Left cardiac atrium (tissue), 4 donors: ENCODE measurements at regions of chrX and their contacts with region 1.

Region 1: DNA sequence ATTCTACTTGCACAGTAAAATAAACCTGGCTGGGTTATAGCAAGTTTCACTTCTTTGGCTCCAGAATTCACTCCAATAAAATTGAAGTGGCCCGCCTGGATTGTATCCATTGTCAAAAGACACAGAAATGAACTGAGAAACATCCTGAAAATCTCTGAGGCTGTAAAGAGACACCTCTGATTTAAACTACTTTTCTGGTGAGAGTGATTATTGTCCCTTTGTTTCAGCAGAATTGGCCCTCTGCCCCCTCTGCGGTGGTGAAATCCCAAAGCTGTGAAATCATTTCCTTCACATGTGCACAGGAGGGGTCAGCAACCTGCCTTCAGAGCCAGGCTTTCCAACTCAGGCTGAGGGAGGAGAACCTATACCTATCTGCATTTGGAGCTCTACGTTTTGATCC is 23.0 kb downstream of the GAB3 start:
- DNase-seq: peak; percentile 64
- ATAC-seq: peak; percentile 14 to 64

Region 2: DNA sequence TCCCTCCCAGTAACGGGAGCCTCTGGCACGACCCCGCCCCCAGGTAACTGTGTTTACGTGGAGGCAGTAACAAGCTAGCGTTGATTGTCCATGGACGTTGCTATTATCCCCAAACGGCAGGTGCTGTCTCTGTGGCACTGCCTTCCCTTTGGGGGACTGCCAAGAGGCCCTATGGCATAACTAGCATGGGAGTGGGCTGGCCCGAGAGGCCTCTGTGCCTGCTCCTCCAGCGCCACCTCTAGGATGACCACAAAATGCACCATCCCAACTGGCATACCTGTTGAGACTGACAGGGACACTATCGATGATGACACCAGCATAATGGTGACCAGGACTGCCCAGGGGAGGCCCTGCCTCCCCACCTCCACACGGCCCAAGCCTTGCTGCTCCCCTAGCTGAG is 945.6 kb before region 1 on chrX:
- intact Hi-C with region 1: no loop called
- DNase-seq: no peak
- ATAC-seq: no peak

Region 3: GRCh38 chrX:154750301-154751202 is 22.7 kb after region 1 on chrX and contains the start of gene GAB3:
- intact Hi-C with region 1: loop called in 1 of 2 experiments (anchors 2 kb)
- DNase-seq: peak; percentile 51
- ATAC-seq: peak; percentile 67 to 71
- total RNA-seq, gene GAB3: 10.2 to 18.1 TPM

Region 4: DNA sequence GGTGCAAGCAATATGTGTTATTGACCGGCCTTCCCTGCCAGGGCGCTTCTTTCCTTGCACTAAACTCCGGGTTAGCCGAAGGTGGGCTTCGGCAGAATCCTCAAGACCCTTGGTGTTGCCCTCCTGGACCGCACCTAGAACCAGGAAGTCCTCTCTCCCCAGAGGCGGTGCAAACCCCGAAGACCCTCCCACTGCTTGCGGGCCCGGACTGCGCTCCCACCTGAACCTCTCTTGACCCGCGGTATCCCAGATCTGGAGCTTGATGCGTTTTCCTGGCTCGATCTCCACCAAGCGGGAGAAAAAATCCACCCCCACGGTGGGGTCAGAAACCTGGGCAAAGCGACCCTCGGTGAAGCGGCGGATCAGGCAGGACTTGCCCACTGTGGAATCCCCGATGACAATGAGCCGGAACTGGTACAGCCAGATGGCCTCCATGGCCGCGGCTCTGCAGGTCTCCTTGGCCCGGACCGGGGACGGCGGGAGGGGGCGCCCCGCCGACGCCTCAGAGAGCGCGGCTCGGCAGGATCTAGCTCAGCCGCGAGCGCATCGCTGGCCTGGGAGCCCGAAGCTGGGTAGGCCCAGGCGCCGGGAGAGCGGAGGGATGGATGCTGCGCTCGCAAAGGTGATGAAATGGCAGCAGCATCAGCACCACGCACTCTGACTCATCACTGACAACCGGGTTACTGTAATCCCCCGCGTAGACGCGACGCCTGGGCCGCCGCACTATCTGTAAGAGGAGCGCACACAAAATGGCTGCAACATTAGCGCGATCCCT is 536.2 kb after region 1 on chrX and contains the start of gene RAB39B:
- intact Hi-C with region 1: no loop called
- DNase-seq: peak; percentile 64
- ATAC-seq: peak; percentile 91
- total RNA-seq, gene RAB39B: 0.24 to 0.27 TPM